Dendritic cell treated with granulocyte-macrophage colony-stimulating factor and Interleukin-4, amounts not matched to agents 40 ng/mL and 50 ng/mL, for 4 days (primary cell): ENCODE measurements at regions of chr6 and their contacts with region 1.

Region 1: GRCh38 chr6:43013843-43014433 is at the starts of genes KLHDC3 and MEA1:
- H3K4me3 Mint-ChIP-seq: peak within 1 kb of the TSS; percentile 95
- H3K27ac Mint-ChIP-seq: peak within 1 kb of the TSS; percentile 86
- H3K4me1 Mint-ChIP-seq: peaks cover 70% of the 10 kb centered on the region
- H3K27me3 Mint-ChIP-seq: no peaks in the 10 kb centered on the region

Region 2: DNA sequence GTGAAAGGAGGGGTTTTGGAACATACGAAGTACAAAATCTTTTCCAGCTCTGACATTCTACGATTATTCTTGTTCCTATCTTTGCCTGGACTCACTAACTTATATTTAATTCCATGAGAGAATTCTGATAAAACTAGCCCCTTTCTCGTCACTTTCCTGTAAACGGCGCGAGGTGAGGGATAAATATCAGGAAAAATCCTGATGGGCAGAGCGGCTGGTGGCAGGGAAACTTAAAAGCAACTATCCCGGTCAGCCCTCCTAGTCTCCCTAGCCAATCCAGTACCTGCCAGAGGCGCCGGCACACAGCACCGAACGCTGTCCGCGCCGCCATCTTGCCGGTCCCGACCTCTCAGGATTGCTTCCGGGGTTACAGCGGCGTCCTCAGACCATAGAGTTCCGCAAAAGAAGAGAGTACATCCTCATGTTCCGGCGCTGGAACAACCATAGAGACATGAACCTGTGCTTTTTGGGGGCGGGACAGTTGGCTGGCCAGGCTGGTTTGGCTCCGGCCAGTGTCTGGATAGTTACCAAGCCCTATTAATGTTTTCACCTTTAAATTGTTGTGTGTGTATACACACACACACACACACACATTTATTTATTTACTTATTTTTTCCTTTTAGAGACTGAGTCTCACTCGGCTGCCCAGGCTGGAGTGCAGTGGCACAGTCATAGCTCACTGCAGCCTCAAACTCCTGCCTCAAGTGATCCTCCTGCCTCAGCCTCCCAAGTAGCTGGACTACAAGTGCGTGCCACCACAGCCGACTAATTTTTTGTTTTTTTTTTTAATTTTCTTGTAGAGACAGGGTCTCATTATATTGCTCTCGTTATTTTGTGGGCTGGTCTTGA is 796.2 kb before region 1 on chr6 and contains the start of gene MRPS10:
- intact Hi-C with region 1: loop called (anchors 5 kb)
- H3K4me3 Mint-ChIP-seq: peak within 1 kb of the TSS; percentile 89
- H3K27ac Mint-ChIP-seq: peak within 1 kb of the TSS; percentile 93
- H3K4me1 Mint-ChIP-seq: peaks cover 16% of the 10 kb centered on the region
- H3K27me3 Mint-ChIP-seq: no peaks in the 10 kb centered on the region

Region 3: GRCh38 chr6:42911171-42912021 is 102.5 kb before region 1 on chr6:
- intact Hi-C with region 1: no loop called
- H3K4me3 Mint-ChIP-seq: peak overlapping the region; percentile 4
- H3K27ac Mint-ChIP-seq: no peak overlapping the region
- H3K4me1 Mint-ChIP-seq: peaks cover 6% of the 10 kb centered on the region
- H3K27me3 Mint-ChIP-seq: peaks cover 21% of the 10 kb centered on the region

Region 4: GRCh38 chr6:42984001-42984923 is 29.7 kb before region 1 on chr6 and contains the start of gene PPP2R5D:
- intact Hi-C with region 1: loop called (anchors 2 kb)
- H3K4me3 Mint-ChIP-seq: peak within 1 kb of the TSS; percentile 80
- H3K27ac Mint-ChIP-seq: peak within 1 kb of the TSS; percentile 80
- H3K4me1 Mint-ChIP-seq: peaks cover 70% of the 10 kb centered on the region
- H3K27me3 Mint-ChIP-seq: no peaks in the 10 kb centered on the region

Region 5: GRCh38 chr6:43059168-43060033 is 45.5 kb after region 1 on chr6 and contains the starts of genes KLC4 and MRPL2:
- intact Hi-C with region 1: loop called (anchors 1 kb)
- H3K4me3 Mint-ChIP-seq: peak within 1 kb of the TSS; percentile 91
- H3K27ac Mint-ChIP-seq: peak within 1 kb of the TSS; percentile 97
- H3K4me1 Mint-ChIP-seq: peaks cover 29% of the 10 kb centered on the region
- H3K27me3 Mint-ChIP-seq: no peaks in the 10 kb centered on the region

Region 6: GRCh38 chr6:43096451-43097097 is 82.6 kb after region 1 on chr6:
- intact Hi-C with region 1: no loop called
- H3K4me3 Mint-ChIP-seq: no peak overlapping the region
- H3K27ac Mint-ChIP-seq: no peak overlapping the region
- H3K4me1 Mint-ChIP-seq: peaks cover 14% of the 10 kb centered on the region
- H3K27me3 Mint-ChIP-seq: no peaks in the 10 kb centered on the region

Region 7: GRCh38 chr6:43143235-43144124 is 129.5 kb after region 1 on chr6:
- intact Hi-C with region 1: loop called (anchors 2 kb)
- H3K4me3 Mint-ChIP-seq: no peak overlapping the region
- H3K27ac Mint-ChIP-seq: no peak overlapping the region
- H3K4me1 Mint-ChIP-seq: peaks cover 8% of the 10 kb centered on the region
- H3K27me3 Mint-ChIP-seq: no peaks in the 10 kb centered on the region